ENCODE measurements at regions of chr7 and their contacts with region 1.

Region 1: DNA sequence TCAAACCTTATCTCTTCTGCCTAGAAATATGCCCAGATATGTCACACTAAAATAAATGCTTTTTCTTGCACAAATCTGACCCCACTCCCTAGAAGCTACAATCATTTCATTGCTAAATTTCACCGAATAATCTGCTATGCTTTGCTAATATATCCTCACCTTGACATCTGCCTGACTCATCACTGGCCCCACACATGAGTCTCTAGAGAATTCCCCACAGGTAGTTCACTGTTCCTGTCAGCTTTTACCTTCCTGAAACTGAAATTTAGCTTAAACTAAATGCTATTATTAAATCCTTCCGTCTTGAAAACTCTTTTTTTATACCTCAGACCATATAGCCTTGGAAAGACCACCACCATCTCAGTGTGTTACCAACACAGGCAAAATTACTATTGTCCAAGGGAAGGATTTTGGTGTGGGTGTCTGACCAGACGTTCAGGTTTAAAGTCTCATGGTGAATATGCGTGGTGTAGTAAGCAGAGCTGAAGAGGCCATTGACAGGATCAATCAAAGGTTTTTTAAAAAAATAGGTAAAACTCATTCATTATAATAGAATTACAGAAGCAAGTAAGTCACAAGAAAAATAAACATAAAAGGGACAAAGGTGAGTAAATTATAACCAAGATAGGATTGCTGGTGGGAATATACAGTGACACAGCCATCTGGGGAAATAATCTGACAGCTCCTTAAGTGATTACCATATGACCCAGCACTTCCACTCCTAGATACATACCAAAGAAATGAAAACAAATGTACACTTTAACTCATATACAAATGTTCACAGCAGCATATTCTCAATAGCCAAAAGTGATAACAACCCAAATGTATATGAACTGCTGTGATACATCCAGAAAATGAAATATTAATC is 173.5 kb downstream of the KMT2E start:
- DNase-seq: peak; percentile 40
- H3K4me3 Mint-ChIP-seq: no peak overlapping the region
- H3K27ac Mint-ChIP-seq: peak overlapping the region; percentile 67
- H3K4me1 Mint-ChIP-seq: peaks cover 32% of the 10 kb centered on the region
- H3K27me3 Mint-ChIP-seq: no peaks in the 10 kb centered on the region
- CTCF ChIP-seq: no peak

Region 2: GRCh38 chr7:105219780-105220160 is 32.2 kb after region 1 on chr7:
- CTCF ChIA-PET with region 1: no interaction called
- POLR2A ChIA-PET with region 1: interaction called, 23 read pairs
- intact Hi-C with region 1: no loop called
- DNase-seq: peak; percentile 71
- H3K4me3 Mint-ChIP-seq: peak overlapping the region; percentile 50
- H3K27ac Mint-ChIP-seq: peak overlapping the region; percentile 65
- H3K4me1 Mint-ChIP-seq: peaks cover 51% of the 10 kb centered on the region
- H3K27me3 Mint-ChIP-seq: no peaks in the 10 kb centered on the region
- CTCF ChIP-seq: no peak

Region 3: DNA sequence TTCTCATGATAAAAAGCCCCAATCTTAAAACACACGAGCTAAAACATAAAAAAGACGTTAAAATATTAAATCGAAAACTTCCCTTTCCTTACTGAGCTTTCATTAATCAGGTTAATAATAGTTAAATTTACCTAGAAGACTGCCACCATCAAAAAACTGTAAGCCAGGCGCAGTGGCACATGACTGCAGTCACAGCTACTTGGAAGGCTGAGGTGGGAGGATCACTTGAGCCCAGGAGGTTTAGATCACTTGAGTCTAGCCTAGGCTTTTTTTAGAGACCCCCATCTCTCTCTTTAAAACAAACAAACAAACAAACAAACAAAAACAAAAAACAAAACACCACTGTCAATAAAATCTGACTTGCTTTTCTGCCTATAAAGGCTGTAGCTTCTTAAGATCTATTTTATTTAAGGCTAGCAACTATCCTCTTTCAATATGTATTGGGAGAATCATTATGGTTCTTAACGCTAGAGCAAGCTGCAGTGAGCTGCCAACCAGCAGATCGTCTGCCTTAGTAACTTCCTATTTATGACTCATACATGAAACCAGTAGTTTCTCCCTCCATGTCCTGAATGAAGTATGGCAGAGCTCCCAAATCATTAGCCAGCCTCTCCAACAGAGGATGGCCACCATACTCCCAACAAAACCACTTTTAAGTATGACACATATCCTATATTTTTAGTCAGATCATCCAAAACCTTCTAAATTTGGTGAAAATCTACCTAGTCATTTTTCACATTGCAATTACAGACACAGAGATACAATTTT is 37.5 kb after region 1 on chr7:
- CTCF ChIA-PET with region 1: interaction called, 3 read pairs
- POLR2A ChIA-PET with region 1: interaction called, 13 read pairs
- intact Hi-C with region 1: no loop called
- DNase-seq: peak; percentile 91
- H3K4me3 Mint-ChIP-seq: peak overlapping the region; percentile 65
- H3K27ac Mint-ChIP-seq: peak overlapping the region; percentile 95
- H3K4me1 Mint-ChIP-seq: peaks cover 31% of the 10 kb centered on the region
- H3K27me3 Mint-ChIP-seq: no peaks in the 10 kb centered on the region
- CTCF ChIP-seq: no peak

Region 4: GRCh38 chr7:105230486-105230885 is 43.0 kb after region 1 on chr7:
- CTCF ChIA-PET with region 1: interaction called, 3 read pairs
- POLR2A ChIA-PET with region 1: interaction called, 13 read pairs
- intact Hi-C with region 1: no loop called
- DNase-seq: no peak
- H3K4me3 Mint-ChIP-seq: no peak overlapping the region
- H3K27ac Mint-ChIP-seq: peak overlapping the region; percentile 66
- H3K4me1 Mint-ChIP-seq: peaks cover 23% of the 10 kb centered on the region
- H3K27me3 Mint-ChIP-seq: no peaks in the 10 kb centered on the region
- CTCF ChIP-seq: no peak